Activated CD4-positive, alpha-beta T cell treated with anti-CD3 and anti-CD28 coated beads, Interleukin-2, amount 10 ng/mL, durations not matched to agents 7 days and 5 days (primary cell): ENCODE measurements at regions of chr1 and their contacts with region 1.

Region 1: GRCh38 chr1:150642296-150642695 is 12.9 kb upstream of the ENSA start:
- DNase-seq: no peak
- H3K4me3 Mint-ChIP-seq: no peak overlapping the region
- H3K27ac Mint-ChIP-seq: no peak overlapping the region
- H3K4me1 Mint-ChIP-seq: no peaks in the 10 kb centered on the region
- H3K27me3 Mint-ChIP-seq: no peaks in the 10 kb centered on the region

Region 2: DNA sequence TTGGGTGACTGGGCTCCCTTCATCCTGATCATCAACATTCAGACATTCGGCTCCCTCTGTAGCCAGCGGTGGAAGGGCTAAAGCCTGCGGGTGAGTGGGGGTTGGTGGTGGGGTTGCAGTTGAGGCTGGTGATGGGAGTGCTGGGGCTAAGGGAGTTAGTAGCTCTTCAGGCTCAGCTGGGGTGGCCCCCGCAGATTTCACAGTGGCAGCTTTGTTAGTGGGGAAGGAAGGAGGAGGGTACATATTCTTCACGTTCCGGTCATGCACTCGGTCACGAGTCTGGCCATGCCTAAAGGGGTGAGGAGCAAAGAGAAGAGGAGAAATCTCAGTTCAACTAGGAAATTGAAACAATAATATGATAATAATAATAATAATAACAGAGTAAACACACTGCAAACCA is 763.9 kb after region 1 on chr1:
- CTCF ChIA-PET with region 1: interaction called, 10 read pairs
- POLR2A ChIA-PET with region 1: no interaction called
- DNase-seq: no peak
- H3K4me3 Mint-ChIP-seq: no peak overlapping the region
- H3K27ac Mint-ChIP-seq: no peak overlapping the region
- H3K4me1 Mint-ChIP-seq: peaks cover 9% of the 10 kb centered on the region
- H3K27me3 Mint-ChIP-seq: no peaks in the 10 kb centered on the region